ENCODE measurements at regions of chr15 and their contacts with region 1.

Region 1: GRCh38 chr15:46312133-46312740 is 677.4 kb downstream of the SQOR start:
- DNase-seq: no peak
- ATAC-seq: peak; percentile 70

Region 2: GRCh38 chr15:46496491-46497115 is 184.4 kb after region 1 on chr15:
- intact Hi-C with region 1: loop called (anchors 10 kb)
- DNase-seq: no peak
- ATAC-seq: no peak